CD8-positive, alpha-beta T cell (primary cell): ENCODE measurements at regions of chrX and their contacts with region 1.

Region 1: DNA sequence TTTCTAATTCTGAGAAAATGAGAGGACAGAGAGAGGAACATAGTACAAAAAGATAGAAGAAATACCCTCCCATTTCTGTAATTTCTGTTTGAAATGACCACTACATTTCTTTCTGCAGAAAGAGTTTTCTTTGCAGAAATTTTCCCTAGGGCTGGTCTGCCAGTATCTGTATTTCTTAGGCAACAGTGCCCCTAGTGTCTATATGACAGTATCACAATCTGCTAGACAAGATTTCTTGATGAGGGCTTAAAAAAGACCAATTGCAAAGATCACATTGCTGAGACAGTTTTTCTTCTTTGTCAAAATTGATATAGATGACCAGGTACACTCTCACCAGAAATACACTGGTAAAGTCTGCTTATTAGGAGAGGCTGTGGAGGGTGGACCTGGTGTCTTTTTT is 81.0 kb upstream of the ZDHHC15 start:
- DNase-seq: peak in 2 of 9 experiments; percentile 17 to 43
- ATAC-seq: no peak
- H3K4me3 ChIP-seq: no peak overlapping the region
- H3K4me3 Mint-ChIP-seq: no peak overlapping the region
- H3K27ac ChIP-seq: no peak overlapping the region
- H3K27ac Mint-ChIP-seq: no peak overlapping the region
- H3K4me1 ChIP-seq: no peaks in the 10 kb centered on the region
- H3K4me1 Mint-ChIP-seq: no peaks in the 10 kb centered on the region
- H3K27me3 ChIP-seq: no peaks in the 10 kb centered on the region
- H3K27me3 Mint-ChIP-seq: no peaks in the 10 kb centered on the region
- CTCF ChIP-seq: peak; percentile 60

Region 2: DNA sequence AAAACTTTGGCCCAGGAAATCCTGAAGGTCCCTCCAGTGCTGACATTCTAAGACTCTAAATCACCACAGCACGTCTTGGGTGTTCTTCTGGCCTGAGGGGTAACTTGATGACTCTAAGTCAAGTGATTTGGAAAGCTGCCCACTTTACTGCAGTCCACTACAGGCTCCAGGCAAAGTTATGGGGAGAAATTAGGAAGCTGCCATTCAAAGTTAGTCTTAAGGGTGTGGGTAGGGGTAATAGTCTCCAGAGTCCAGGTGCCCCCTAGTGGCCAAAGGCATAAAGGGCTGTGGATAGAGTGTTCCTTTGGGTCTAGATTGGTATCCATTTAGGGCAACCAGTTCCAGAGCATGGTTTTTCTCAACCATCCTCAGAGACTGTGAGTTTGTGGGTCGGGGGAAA is 1221.2 kb before region 1 on chrX:
- CTCF ChIA-PET with region 1: no interaction called
- POLR2A ChIA-PET with region 1: no interaction called
- intact Hi-C with region 1: loop called in 1 of 2 experiments (anchors 5 kb)
- DNase-seq: peak; percentile 5 to 67 (median 51)
- ATAC-seq: no peak
- H3K4me3 ChIP-seq: no peak overlapping the region
- H3K4me3 Mint-ChIP-seq: no peak overlapping the region
- H3K27ac ChIP-seq: no peak overlapping the region
- H3K27ac Mint-ChIP-seq: no peak overlapping the region
- H3K4me1 ChIP-seq: no peaks in the 10 kb centered on the region
- H3K4me1 Mint-ChIP-seq: no peaks in the 10 kb centered on the region
- H3K27me3 ChIP-seq: no peaks in the 10 kb centered on the region
- H3K27me3 Mint-ChIP-seq: peaks cover 5% of the 10 kb centered on the region
- CTCF ChIP-seq: peak; percentile 29

Region 3: GRCh38 chrX:74814681-74815080 is 789.2 kb before region 1 on chrX:
- CTCF ChIA-PET with region 1: no interaction called
- POLR2A ChIA-PET with region 1: no interaction called
- intact Hi-C with region 1: no loop called
- DNase-seq: no peak
- ATAC-seq: no peak
- H3K4me3 ChIP-seq: no peak overlapping the region
- H3K4me3 Mint-ChIP-seq: no peak overlapping the region
- H3K27ac ChIP-seq: no peak overlapping the region
- H3K27ac Mint-ChIP-seq: no peak overlapping the region
- H3K4me1 ChIP-seq: no peaks in the 10 kb centered on the region
- H3K4me1 Mint-ChIP-seq: no peaks in the 10 kb centered on the region
- H3K27me3 ChIP-seq: no peaks in the 10 kb centered on the region
- H3K27me3 Mint-ChIP-seq: peaks cover 3% of the 10 kb centered on the region
- CTCF ChIP-seq: no peak

Region 4: DNA sequence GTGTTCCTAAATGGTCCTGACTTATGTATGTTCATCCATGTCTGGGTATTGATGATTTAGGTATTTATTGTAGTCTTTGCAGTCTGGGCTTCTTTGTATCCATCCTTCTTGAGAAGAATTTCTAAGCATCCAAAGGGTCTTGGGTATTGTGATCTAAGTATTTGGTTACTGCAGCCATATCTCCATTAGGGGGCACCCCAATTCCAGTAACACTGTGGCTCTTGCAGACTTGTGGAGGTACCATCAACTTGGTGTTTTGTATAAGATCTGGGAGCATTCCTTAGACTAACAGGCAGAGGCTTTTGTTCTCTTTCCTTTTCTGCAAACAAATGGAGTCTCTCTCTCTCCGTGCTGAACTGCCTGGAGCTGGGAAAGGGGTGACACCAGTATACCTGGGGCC is 564.9 kb before region 1 on chrX:
- CTCF ChIA-PET with region 1: no interaction called
- POLR2A ChIA-PET with region 1: no interaction called
- intact Hi-C with region 1: loop called in 1 of 2 experiments (anchors 5 kb)
- DNase-seq: peak in 2 of 9 experiments; percentile 10 to 16
- ATAC-seq: no peak
- H3K4me3 ChIP-seq: no peak overlapping the region
- H3K4me3 Mint-ChIP-seq: no peak overlapping the region
- H3K27ac ChIP-seq: no peak overlapping the region
- H3K27ac Mint-ChIP-seq: no peak overlapping the region
- H3K4me1 ChIP-seq: no peaks in the 10 kb centered on the region
- H3K4me1 Mint-ChIP-seq: no peaks in the 10 kb centered on the region
- H3K27me3 ChIP-seq: no peaks in the 10 kb centered on the region
- H3K27me3 Mint-ChIP-seq: no peaks in the 10 kb centered on the region
- CTCF ChIP-seq: no peak

Region 5: DNA sequence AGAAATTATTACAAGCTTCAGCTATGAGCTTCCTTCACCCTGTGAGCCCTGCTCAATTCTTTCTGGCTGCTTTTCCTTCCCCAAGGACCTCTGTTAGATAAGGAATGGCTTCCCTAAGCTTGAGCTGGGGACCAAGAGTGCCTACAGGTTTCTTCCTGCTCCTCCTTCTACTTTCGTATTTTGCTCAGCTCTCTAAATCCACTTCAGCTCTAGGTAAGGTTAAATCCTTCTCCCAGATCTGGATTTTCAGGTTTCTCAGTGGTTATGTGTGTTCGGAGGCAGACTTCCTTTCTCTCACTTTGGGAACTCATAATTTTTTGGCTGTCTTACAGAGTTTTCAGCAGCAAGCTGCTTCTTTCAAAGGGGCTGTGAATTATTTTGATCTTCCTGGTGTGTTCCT is 59.0 kb before region 1 on chrX:
- CTCF ChIA-PET with region 1: no interaction called
- POLR2A ChIA-PET with region 1: no interaction called
- intact Hi-C with region 1: no loop called
- DNase-seq: no peak
- ATAC-seq: no peak
- H3K4me3 ChIP-seq: no peak overlapping the region
- H3K4me3 Mint-ChIP-seq: no peak overlapping the region
- H3K27ac ChIP-seq: no peak overlapping the region
- H3K27ac Mint-ChIP-seq: no peak overlapping the region
- H3K4me1 ChIP-seq: no peaks in the 10 kb centered on the region
- H3K4me1 Mint-ChIP-seq: no peaks in the 10 kb centered on the region
- H3K27me3 ChIP-seq: no peaks in the 10 kb centered on the region
- H3K27me3 Mint-ChIP-seq: no peaks in the 10 kb centered on the region
- CTCF ChIP-seq: no peak

Region 6: GRCh38 chrX:75642811-75643361 is 39.1 kb after region 1 on chrX:
- CTCF ChIA-PET with region 1: no interaction called
- POLR2A ChIA-PET with region 1: no interaction called
- intact Hi-C with region 1: no loop called
- DNase-seq: no peak
- ATAC-seq: no peak
- H3K4me3 ChIP-seq: no peak overlapping the region
- H3K4me3 Mint-ChIP-seq: no peak overlapping the region
- H3K27ac ChIP-seq: no peak overlapping the region
- H3K27ac Mint-ChIP-seq: no peak overlapping the region
- H3K4me1 ChIP-seq: no peaks in the 10 kb centered on the region
- H3K4me1 Mint-ChIP-seq: no peaks in the 10 kb centered on the region
- H3K27me3 ChIP-seq: no peaks in the 10 kb centered on the region
- H3K27me3 Mint-ChIP-seq: no peaks in the 10 kb centered on the region
- CTCF ChIP-seq: no peak